Gastrocnemius medialis (tissue), 4 donors: ENCODE measurements at regions of chr1 and their contacts with region 1.

Region 1: GRCh38 chr1:61851849-61852669 is 109.8 kb downstream of the PATJ start:
- DNase-seq: no peak
- ATAC-seq: peak; percentile 78 to 83
- H3K4me3 ChIP-seq: no peak overlapping the region
- H3K27ac ChIP-seq: no peak overlapping the region
- H3K4me1 ChIP-seq: peaks cover 0 to 8% of the 10 kb centered on the region in 2 donors
- H3K27me3 ChIP-seq: no peaks in the 10 kb centered on the region
- CTCF ChIP-seq: peak in 4 of 5 experiments; percentile 55 to 72 (median 72)
- POLR2A ChIP-seq: no peak

Region 2: GRCh38 chr1:59971464-59971911 is 1880.6 kb before region 1 on chr1:
- in situ Hi-C with region 1: no loop called
- intact Hi-C with region 1: loop called (anchors 5 kb)
- DNase-seq: peak; percentile 6 to 44
- ATAC-seq: peak; percentile 80 to 90
- H3K4me3 ChIP-seq: no peak overlapping the region
- H3K27ac ChIP-seq: no peak overlapping the region
- H3K4me1 ChIP-seq: peaks cover 8 to 11% of the 10 kb centered on the region in 2 donors
- H3K27me3 ChIP-seq: no peaks in the 10 kb centered on the region
- CTCF ChIP-seq: peak; percentile 51 to 90 (median 81)
- POLR2A ChIP-seq: no peak

Region 3: DNA sequence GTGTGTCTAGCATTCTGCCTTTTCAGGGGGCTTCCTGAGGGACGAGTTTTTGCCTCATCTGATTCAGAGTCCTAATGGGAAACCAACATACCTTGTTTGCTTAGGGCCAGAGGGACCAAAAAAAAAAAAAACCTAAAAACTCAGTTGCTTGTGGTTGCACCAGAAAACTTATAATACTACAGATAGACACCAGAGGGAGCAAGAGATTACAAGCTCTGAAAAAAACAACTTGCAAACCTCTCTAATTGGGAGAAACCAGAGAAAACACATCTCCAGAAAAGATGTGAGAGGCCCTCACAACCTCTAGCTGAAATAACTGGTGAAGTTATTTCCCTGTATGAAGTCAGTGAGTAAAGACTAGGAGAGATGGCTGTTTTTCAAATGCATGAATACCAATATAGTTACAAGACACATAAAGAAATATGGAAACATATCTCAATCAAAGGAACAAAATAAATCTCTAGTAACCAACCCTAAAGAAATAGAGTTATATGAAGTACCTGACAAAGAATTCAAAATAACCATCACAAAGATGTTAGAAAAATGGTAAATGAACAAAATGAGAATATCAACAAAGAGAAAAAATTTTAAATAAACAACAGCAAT is 1003.4 kb before region 1 on chr1:
- in situ Hi-C with region 1: loop called in 1 of 4 experiments (anchors 25 kb)
- intact Hi-C with region 1: no loop called
- DNase-seq: no peak
- ATAC-seq: no peak
- H3K4me3 ChIP-seq: no peak overlapping the region
- H3K27ac ChIP-seq: no peak overlapping the region
- H3K4me1 ChIP-seq: no peaks in the 10 kb centered on the region
- H3K27me3 ChIP-seq: no peaks in the 10 kb centered on the region
- CTCF ChIP-seq: peak; percentile 51 to 63 (median 57)
- POLR2A ChIP-seq: no peak

Region 4: DNA sequence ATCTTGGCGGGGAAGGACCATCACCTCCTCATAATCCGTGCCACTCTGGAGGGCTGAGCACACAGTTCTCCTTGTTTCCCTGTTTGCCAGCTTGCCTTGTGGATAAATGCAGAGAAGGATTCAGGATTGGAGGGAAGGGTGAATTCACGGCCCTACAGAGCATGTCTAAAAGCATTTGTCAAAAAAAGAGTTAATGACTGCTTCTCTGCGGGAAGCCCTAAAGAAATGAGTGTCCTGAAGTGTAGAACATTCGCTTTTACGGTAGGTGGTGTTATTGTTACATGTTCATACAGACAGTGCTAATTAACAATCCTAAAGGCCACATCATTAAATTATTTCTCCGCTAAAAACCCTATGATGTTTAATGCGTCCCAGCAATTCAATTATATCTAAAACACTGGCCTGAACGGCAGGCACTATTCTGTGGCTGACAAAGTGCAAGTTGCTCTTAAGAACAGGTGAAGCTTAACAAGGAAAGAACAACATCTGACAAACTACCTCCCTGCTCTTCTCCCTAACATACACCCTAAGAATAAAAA is 882.0 kb before region 1 on chr1:
- in situ Hi-C with region 1: loop called in 2 of 4 experiments (anchors 10 kb)
- intact Hi-C with region 1: loop called (anchors 5 kb)
- DNase-seq: no peak
- ATAC-seq: peak; percentile 58 to 73
- H3K4me3 ChIP-seq: no peak overlapping the region
- H3K27ac ChIP-seq: no peak overlapping the region
- H3K4me1 ChIP-seq: peaks cover 9 to 11% of the 10 kb centered on the region in 2 donors
- H3K27me3 ChIP-seq: no peaks in the 10 kb centered on the region
- CTCF ChIP-seq: peak; percentile 28 to 59 (median 40)
- POLR2A ChIP-seq: no peak

Region 5: GRCh38 chr1:61043010-61043820 is 808.8 kb before region 1 on chr1:
- in situ Hi-C with region 1: loop called (anchors 10 to 25 kb)
- intact Hi-C with region 1: loop called (anchors 2 kb)
- DNase-seq: peak; percentile 78 to 84
- ATAC-seq: peak; percentile 93 to 94
- H3K4me3 ChIP-seq: peak overlapping the region; percentile 62 to 87 (median 84)
- H3K27ac ChIP-seq: peak overlapping the region; percentile 71 to 92 (median 90)
- H3K4me1 ChIP-seq: no peaks in the 10 kb centered on the region
- H3K27me3 ChIP-seq: no peaks in the 10 kb centered on the region
- CTCF ChIP-seq: peak; percentile 87 to 94 (median 92)
- POLR2A ChIP-seq: no peak

Region 6: GRCh38 chr1:61741711-61742619 is 110.1 kb before region 1 on chr1 and contains the start of gene PATJ:
- in situ Hi-C with region 1: no loop called
- intact Hi-C with region 1: loop called (anchors 10 kb)
- DNase-seq: peak; percentile 36 to 46
- ATAC-seq: peak; percentile 80 to 82
- H3K4me3 ChIP-seq: peak within 1 kb of the TSS; percentile 77 to 97 (median 82)
- H3K27ac ChIP-seq: peak within 1 kb of the TSS; percentile 86 to 95 (median 89)
- H3K4me1 ChIP-seq: peaks cover 20 to 22% of the 10 kb centered on the region in 2 donors
- H3K27me3 ChIP-seq: no peaks in the 10 kb centered on the region
- CTCF ChIP-seq: no peak
- POLR2A ChIP-seq: no peak
- total RNA-seq, gene PATJ: 19.3 to 44.8 (median 26.0) TPM

Region 7: GRCh38 chr1:62070384-62071011 is 218.4 kb after region 1 on chr1:
- in situ Hi-C with region 1: no loop called
- intact Hi-C with region 1: loop called (anchors 10 kb)
- DNase-seq: no peak
- ATAC-seq: peak; percentile 11 to 23
- H3K4me3 ChIP-seq: peak overlapping the region in 1 of 4 donors; percentile 9
- H3K27ac ChIP-seq: peak overlapping the region; percentile 87 to 96 (median 92)
- H3K4me1 ChIP-seq: peaks cover 35 to 39% of the 10 kb centered on the region in 2 donors
- H3K27me3 ChIP-seq: no peaks in the 10 kb centered on the region
- CTCF ChIP-seq: peak; percentile 57 to 70 (median 60)
- POLR2A ChIP-seq: no peak